Ascending aorta (tissue), 2 donors: ENCODE measurements at regions of chr11 and their contacts with region 1.

Region 1: GRCh38 chr11:39651857-39652461 is 1807.5 kb downstream of the LRRC4C start:
- DNase-seq: no peak
- H3K4me3 ChIP-seq: no peak overlapping the region
- H3K27ac ChIP-seq: no peak overlapping the region
- H3K4me1 ChIP-seq: no peaks in the 10 kb centered on the region
- H3K27me3 ChIP-seq: no peaks in the 10 kb centered on the region
- CTCF ChIP-seq: no peak

Region 2: GRCh38 chr11:39630365-39630764 is 21.6 kb before region 1 on chr11:
- intact Hi-C with region 1: no loop called
- DNase-seq: no peak
- H3K4me3 ChIP-seq: no peak overlapping the region
- H3K27ac ChIP-seq: no peak overlapping the region
- H3K4me1 ChIP-seq: no peaks in the 10 kb centered on the region
- H3K27me3 ChIP-seq: no peaks in the 10 kb centered on the region
- CTCF ChIP-seq: no peak

Region 3: GRCh38 chr11:39810358-39810757 is 158.4 kb after region 1 on chr11:
- intact Hi-C with region 1: loop called (anchors 5 kb)
- DNase-seq: no peak
- H3K4me3 ChIP-seq: no peak overlapping the region
- H3K27ac ChIP-seq: no peak overlapping the region
- H3K4me1 ChIP-seq: no peaks in the 10 kb centered on the region
- H3K27me3 ChIP-seq: no peaks in the 10 kb centered on the region
- CTCF ChIP-seq: no peak